ENCODE measurements at regions of chr12 and their contacts with region 1.

Region 1: DNA sequence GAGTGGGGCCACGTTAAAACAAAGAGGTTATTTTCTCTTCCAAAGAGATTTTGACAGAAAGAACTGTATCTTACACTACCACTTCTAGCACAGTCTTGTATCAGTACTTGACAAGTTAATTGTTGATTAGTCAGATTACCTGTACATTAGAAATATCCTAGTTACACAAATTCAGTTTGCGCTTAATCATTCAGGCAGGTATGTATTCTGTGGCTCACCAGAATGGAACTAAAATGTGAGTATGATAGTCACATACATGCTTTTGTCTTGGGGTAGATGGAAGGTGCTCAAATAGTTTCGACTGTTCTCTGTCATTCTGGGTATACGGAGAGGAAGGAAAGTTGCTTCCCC is 7.2 kb downstream of the PKP2 start:
- DNase-seq: no peak
- H3K4me3 ChIP-seq: no peak overlapping the region
- H3K27ac ChIP-seq: no peak overlapping the region
- H3K4me1 ChIP-seq: no peaks in the 10 kb centered on the region
- H3K27me3 ChIP-seq: no peaks in the 10 kb centered on the region
- CTCF ChIP-seq: no peak
- POLR2A ChIP-seq: no peak

Region 2: GRCh38 chr12:32702473-32702872 is 186.9 kb before region 1 on chr12:
- intact Hi-C with region 1: no loop called
- DNase-seq: no peak
- H3K4me3 ChIP-seq: no peak overlapping the region
- H3K27ac ChIP-seq: no peak overlapping the region
- H3K4me1 ChIP-seq: no peaks in the 10 kb centered on the region
- H3K27me3 ChIP-seq: no peaks in the 10 kb centered on the region
- CTCF ChIP-seq: no peak
- POLR2A ChIP-seq: no peak

Region 3: DNA sequence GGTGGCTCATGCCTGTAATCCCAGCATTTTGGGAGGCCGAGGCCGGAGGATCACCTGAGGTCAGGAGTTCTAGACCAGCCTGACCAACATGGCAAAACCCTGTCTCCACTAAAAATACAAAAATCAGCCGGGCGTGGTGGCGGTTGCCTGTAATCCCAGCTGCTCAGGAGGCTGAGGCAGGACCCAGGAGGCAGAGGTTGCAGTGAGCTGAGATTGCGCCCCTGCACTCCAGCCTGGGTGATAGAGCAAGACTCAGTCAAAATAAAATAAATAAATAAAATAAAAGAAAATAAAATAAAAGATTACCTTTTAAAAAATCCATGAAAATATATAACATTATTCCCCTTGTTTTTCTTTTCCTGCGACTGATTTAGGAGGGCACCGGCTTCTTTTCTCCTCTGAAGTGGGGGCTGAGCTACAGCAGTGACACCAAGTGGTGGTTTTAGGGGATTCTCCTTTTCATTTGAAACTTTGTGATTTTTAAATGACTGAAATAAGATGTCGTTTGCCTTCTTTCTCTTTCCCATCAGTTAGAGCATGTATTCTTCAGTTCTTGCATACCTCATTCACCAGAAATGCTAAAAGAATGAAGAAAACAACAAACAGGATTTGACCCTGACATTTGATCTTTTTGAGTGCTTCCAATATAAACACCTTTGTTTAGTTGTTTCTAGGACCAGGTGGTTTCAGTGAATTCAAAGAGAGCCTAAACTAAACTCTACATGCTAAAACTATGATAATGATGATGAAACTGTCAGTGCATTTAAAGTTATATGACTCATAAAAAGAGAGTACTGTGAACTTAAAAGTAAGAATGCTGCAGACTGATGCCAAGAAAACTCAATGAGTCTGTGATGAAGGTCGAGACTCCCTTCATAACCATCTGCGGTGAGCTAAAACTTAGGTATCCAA is 29.8 kb after region 1 on chr12:
- intact Hi-C with region 1: loop called (anchors 2 kb)
- DNase-seq: no peak
- H3K4me3 ChIP-seq: no peak overlapping the region
- H3K27ac ChIP-seq: no peak overlapping the region
- H3K4me1 ChIP-seq: no peaks in the 10 kb centered on the region
- H3K27me3 ChIP-seq: no peaks in the 10 kb centered on the region
- CTCF ChIP-seq: no peak
- POLR2A ChIP-seq: no peak

Measured in vagina (tissue), 2 donors.